ENCODE measurements at regions of chr1 and their contacts with region 1.

Region 1: DNA sequence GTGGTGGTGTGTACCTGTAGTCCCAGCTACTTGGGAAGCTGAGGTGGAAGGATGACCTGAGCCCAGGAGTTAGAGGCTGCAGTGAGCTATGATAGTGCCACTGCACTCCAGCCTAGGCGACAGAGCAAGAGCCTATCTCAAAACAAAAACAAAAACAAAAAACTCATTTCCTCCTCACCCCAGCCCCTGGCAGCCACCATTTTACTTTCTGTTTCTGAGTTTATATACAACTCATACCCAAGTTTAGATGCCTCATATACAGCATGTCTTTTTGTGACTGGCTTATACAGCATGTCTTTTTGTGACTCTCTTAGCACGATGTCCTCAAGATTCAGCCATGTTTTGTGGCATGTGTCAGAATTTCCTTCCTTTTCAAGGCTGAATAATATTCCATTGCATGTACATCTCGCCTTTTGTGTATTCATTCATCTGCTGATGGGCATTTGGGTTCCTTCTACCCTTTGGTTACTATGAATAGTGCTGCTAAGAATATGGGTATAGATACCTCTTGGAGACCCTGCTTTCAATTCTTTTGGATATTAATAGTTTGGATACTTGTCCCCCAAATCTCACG is 14.7 kb downstream of the COA7 start:
- DNase-seq: peak; percentile 64
- H3K4me3 Mint-ChIP-seq: no peak overlapping the region
- H3K27ac Mint-ChIP-seq: no peak overlapping the region
- H3K4me1 Mint-ChIP-seq: peaks cover 8% of the 10 kb centered on the region
- H3K27me3 Mint-ChIP-seq: no peaks in the 10 kb centered on the region

Region 2: DNA sequence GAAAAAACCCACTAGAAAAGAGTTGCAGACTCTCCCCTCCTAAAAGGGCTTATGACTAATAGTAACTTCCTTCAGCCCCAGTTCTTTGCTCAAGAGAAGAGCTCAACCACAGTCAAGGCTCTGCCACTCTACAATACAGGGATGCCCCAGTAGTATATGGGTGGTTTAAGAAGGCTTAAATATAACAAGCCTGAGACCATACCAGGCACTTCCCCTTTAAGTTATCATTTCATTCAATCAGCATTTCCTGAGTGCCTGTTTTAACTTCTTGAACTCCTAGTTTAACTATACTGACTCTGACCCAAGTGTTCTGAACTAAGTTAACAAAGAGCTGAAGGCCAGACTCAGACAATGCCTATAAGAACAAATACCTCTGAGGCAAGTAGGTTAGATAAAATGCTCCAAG is 259.2 kb before region 1 on chr1:
- intact Hi-C with region 1: loop called (anchors 1 kb)
- DNase-seq: peak; percentile 78
- H3K4me3 Mint-ChIP-seq: peak overlapping the region; percentile 67
- H3K27ac Mint-ChIP-seq: peak overlapping the region; percentile 81
- H3K4me1 Mint-ChIP-seq: peaks cover 39% of the 10 kb centered on the region
- H3K27me3 Mint-ChIP-seq: no peaks in the 10 kb centered on the region

Region 3: GRCh38 chr1:52659356-52659755 is 24.1 kb before region 1 on chr1:
- intact Hi-C with region 1: loop called (anchors 1 kb)
- DNase-seq: peak; percentile 74
- H3K4me3 Mint-ChIP-seq: no peak overlapping the region
- H3K27ac Mint-ChIP-seq: peak overlapping the region; percentile 88
- H3K4me1 Mint-ChIP-seq: peaks cover 21% of the 10 kb centered on the region
- H3K27me3 Mint-ChIP-seq: no peaks in the 10 kb centered on the region

Region 4: GRCh38 chr1:52669696-52670095 is 13.8 kb before region 1 on chr1:
- intact Hi-C with region 1: no loop called
- DNase-seq: no peak
- H3K4me3 Mint-ChIP-seq: no peak overlapping the region
- H3K27ac Mint-ChIP-seq: no peak overlapping the region
- H3K4me1 Mint-ChIP-seq: peaks cover 8% of the 10 kb centered on the region
- H3K27me3 Mint-ChIP-seq: no peaks in the 10 kb centered on the region

Measured in activated CD4-positive, alpha-beta T cell treated with anti-CD3 and anti-CD28 coated beads, Interleukin-2, amount 10 ng/mL, durations not matched to agents 24 days and 14 days (primary cell).